ENCODE measurements at regions of chr5 and their contacts with region 1.

Region 1: GRCh38 chr5:36744773-36745589 is 131.6 kb upstream of the NIPBL start:
- DNase-seq: no peak
- ATAC-seq: peak; percentile 90
- H3K4me3 ChIP-seq: peak overlapping the region; percentile 57 to 80
- H3K27ac ChIP-seq: no peak overlapping the region
- H3K4me1 ChIP-seq: 0 out of 2 replicates have a peak, but pooled peaks cover 3% of the 10 kb centered on the region
- H3K27me3 ChIP-seq: peaks cover 37% of the 10 kb centered on the region
- CTCF ChIP-seq: peak; percentile 54

Region 2: GRCh38 chr5:36728697-36729543 is 16.1 kb before region 1 on chr5:
- CTCF ChIA-PET with region 1: interaction called, 19 read pairs
- POLR2A ChIA-PET with region 1: no interaction called
- in situ Hi-C with region 1: no loop called
- intact Hi-C with region 1: no loop called
- DNase-seq: peak; percentile 58
- ATAC-seq: peak; percentile 84
- H3K4me3 ChIP-seq: no peak overlapping the region
- H3K27ac ChIP-seq: no peak overlapping the region
- H3K4me1 ChIP-seq: no peaks in the 10 kb centered on the region
- H3K27me3 ChIP-seq: no peaks in the 10 kb centered on the region; the same call in 1 of the 2 replicates
- CTCF ChIP-seq: peak; percentile 76; the same call in 1 of the 2 replicates

Region 3: GRCh38 chr5:36763454-36763853 is 18.5 kb after region 1 on chr5:
- CTCF ChIA-PET with region 1: no interaction called
- POLR2A ChIA-PET with region 1: no interaction called
- in situ Hi-C with region 1: no loop called
- intact Hi-C with region 1: no loop called
- DNase-seq: no peak
- ATAC-seq: no peak
- H3K4me3 ChIP-seq: no peak overlapping the region
- H3K27ac ChIP-seq: no peak overlapping the region
- H3K4me1 ChIP-seq: no peaks in the 10 kb centered on the region
- H3K27me3 ChIP-seq: peaks cover 5% of the 10 kb centered on the region
- CTCF ChIP-seq: no peak

Measured in Panc1 (cell line).